Aorta (tissue), 5 donors: ENCODE measurements at regions of chr2 and their contacts with region 1.

Region 1: GRCh38 chr2:38602732-38603401 is at the start of gene HNRNPLL:
- DNase-seq: peak; percentile 99 to 100
- ATAC-seq: peak; percentile 97
- H3K4me3 ChIP-seq: peak within 1 kb of the TSS; percentile 64 to 99
- H3K27ac ChIP-seq: peak within 1 kb of the TSS; percentile 81 to 94
- H3K4me1 ChIP-seq: peaks cover 0 to 2% of the 10 kb centered on the region in 2 donors
- H3K27me3 ChIP-seq: no peaks in the 10 kb centered on the region
- total RNA-seq, gene HNRNPLL: 60.8 to 65.2 TPM

Region 2: DNA sequence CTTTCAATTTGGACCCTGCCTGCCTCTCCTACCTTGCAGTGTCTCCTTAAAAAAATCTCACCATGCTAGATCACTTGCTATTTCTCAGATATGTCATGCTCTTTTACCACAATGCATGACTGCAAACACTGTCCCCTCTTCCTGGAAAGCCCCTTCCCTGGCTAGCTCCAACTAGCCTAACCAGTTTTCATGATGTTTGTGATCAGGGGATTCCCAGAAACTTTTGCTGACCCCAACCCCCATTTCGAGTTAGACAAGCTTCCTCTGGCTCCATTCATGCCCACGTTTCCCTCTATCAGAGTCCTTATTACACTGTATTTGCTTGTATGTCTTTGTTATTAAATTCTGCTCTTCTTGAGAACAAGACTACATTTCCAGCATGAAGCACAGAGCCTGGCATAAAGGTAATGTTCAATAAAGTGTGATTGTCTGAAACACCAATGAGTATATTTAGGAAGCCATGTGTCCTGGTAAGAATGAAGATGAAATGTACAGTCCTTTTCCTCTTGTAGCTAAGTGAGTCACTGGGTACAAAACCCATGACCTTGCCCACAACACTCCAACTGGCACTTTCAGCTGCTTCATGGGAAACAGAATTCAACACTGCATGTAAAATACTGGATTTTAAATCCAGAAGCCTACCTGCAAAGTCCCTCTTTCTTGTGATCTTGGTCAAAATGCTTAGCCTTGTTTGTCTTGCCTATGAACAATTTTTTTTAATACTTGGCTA is 163.8 kb before region 1 on chr2:
- intact Hi-C with region 1: no loop called
- DNase-seq: no peak
- ATAC-seq: no peak
- H3K4me3 ChIP-seq: no peak overlapping the region
- H3K27ac ChIP-seq: no peak overlapping the region
- H3K4me1 ChIP-seq: peaks cover 1 to 3% of the 10 kb centered on the region in 2 donors
- H3K27me3 ChIP-seq: peaks cover 0 to 1% of the 10 kb centered on the region in 2 donors

Region 3: GRCh38 chr2:38665854-38666555 is 63.1 kb after region 1 on chr2 and contains the start of gene GALM:
- intact Hi-C with region 1: loop called (anchors 2 to 5 kb)
- DNase-seq: peak; percentile 91
- ATAC-seq: peak; percentile 96
- H3K4me3 ChIP-seq: peak within 1 kb of the TSS; percentile 80
- H3K27ac ChIP-seq: peak within 1 kb of the TSS; percentile 18 to 74
- H3K4me1 ChIP-seq: peaks cover 0 to 6% of the 10 kb centered on the region in 2 donors
- H3K27me3 ChIP-seq: no peaks in the 10 kb centered on the region
- total RNA-seq, gene GALM: 8.6 to 16.4 TPM

Region 4: DNA sequence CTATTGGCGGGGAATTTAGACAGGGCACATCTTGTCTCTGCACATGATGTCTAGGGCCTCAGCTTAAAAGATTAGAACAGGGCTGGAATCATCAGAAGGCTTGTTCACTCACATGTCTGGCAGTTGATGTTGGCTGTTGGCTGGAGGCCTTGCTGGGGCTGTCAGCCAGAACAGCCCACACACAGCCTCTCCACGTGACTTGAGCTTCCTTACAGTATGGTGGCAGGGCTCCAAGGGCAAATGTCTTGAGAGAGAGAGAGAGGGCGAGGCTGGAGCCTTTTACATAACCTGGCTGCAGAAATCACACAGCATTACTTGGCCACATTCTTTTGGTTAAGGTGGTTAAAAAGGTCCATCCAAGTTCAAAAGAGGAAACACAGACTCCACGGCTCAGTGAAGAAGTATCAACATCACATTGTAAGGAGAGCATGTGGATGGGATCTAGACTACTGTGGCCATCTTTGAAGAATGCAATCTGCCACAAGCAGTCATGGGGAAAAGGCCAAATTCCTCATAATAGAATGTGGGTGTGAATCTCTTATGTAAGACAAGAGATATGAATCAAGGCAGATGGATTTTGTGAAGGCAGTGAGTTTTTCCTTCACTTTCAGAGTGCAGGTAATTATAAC is 117.9 kb after region 1 on chr2:
- intact Hi-C with region 1: loop called in 1 of 2 experiments (anchors 5 kb)
- DNase-seq: peak; percentile 76 to 85
- ATAC-seq: peak; percentile 88
- H3K4me3 ChIP-seq: no peak overlapping the region
- H3K27ac ChIP-seq: peak overlapping the region in 1 of 2 donors; percentile 19
- H3K4me1 ChIP-seq: no peaks in the 10 kb centered on the region
- H3K27me3 ChIP-seq: no peaks in the 10 kb centered on the region